Activated CD4-positive, alpha-beta T cell treated with anti-CD3 and anti-CD28 coated beads, Interleukin-2, amount 10 ng/mL, durations not matched to agents 7 days and 5 days (primary cell): ENCODE measurements at regions of chr21 and their contacts with region 1.

Region 1: GRCh38 chr21:40270047-40270446 is 402.8 kb downstream of the PCP4 start:
- DNase-seq: no peak
- H3K4me3 Mint-ChIP-seq: no peak overlapping the region
- H3K27ac Mint-ChIP-seq: no peak overlapping the region
- H3K4me1 Mint-ChIP-seq: no peaks in the 10 kb centered on the region
- H3K27me3 Mint-ChIP-seq: no peaks in the 10 kb centered on the region

Region 2: GRCh38 chr21:40080385-40080784 is 189.7 kb before region 1 on chr21:
- CTCF ChIA-PET with region 1: no interaction called
- POLR2A ChIA-PET with region 1: no interaction called
- DNase-seq: no peak
- H3K4me3 Mint-ChIP-seq: no peak overlapping the region
- H3K27ac Mint-ChIP-seq: no peak overlapping the region
- H3K4me1 Mint-ChIP-seq: no peaks in the 10 kb centered on the region
- H3K27me3 Mint-ChIP-seq: no peaks in the 10 kb centered on the region

Region 3: DNA sequence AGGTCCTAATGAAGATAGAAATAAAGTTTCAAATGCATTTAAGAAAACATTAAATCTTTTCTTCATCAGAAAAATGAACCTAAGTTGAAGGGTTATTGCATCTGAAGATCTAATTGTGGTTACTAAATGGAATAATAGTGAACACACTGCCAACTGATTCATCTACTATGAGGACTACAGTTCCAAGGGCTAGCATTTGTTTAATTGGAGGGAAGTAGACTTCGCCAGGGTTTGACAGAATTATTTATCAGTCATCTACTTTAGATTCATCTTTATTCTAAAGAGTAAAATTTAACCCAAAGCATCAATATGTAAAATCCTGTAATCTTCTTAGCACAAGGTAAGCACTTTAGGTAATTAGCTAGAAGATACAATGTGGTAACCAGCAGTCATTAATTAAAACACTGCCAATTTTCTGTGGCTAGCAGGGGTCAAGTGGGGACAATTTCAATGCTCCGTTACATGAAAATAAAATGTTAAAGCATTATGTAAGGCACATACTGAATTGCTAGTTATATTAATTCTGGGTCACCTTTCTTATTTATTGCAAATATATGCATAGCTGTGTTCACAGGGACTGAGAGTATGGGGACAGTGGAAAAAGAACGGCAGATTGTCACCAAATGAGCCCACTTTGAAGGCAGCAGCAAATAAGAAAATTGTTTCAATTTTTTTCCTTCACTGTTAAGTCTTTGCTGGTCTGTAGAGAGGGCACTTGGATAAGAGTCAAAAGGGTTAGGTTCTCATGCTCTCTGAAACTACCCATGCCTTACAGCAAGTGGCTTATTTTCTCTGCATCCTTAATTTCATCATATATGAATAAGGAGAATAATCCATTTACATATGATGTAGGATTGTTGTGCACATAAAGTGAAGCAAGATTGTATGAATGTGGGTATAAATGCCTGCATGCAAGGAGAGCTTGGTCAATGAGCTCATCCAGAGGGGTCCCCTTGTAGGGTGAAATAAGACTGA is 13.2 kb after region 1 on chr21:
- CTCF ChIA-PET with region 1: no interaction called
- POLR2A ChIA-PET with region 1: interaction called, 14 read pairs
- DNase-seq: no peak
- H3K4me3 Mint-ChIP-seq: no peak overlapping the region
- H3K27ac Mint-ChIP-seq: no peak overlapping the region
- H3K4me1 Mint-ChIP-seq: no peaks in the 10 kb centered on the region
- H3K27me3 Mint-ChIP-seq: no peaks in the 10 kb centered on the region

Region 4: DNA sequence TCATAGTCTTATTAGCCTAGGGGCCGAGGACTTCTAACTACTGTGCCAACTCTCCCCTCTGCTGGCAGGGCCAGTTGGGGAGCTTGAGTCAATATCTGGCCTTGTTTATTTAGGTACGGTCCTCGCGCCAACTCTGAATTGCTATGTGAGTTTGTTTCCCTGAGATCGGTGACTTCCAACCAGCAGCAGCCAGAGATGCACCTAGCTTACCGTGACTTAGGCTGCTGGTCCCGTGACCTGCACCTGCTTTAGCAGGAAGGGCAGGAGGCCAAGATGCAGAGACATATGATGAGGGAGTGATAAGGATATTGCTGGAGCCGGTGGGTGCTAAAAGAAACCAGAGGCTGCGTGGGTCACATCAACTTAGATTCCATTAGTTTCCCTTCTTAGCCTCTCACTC is 48.4 kb after region 1 on chr21:
- CTCF ChIA-PET with region 1: no interaction called
- POLR2A ChIA-PET with region 1: no interaction called
- DNase-seq: no peak
- H3K4me3 Mint-ChIP-seq: no peak overlapping the region
- H3K27ac Mint-ChIP-seq: no peak overlapping the region
- H3K4me1 Mint-ChIP-seq: no peaks in the 10 kb centered on the region
- H3K27me3 Mint-ChIP-seq: no peaks in the 10 kb centered on the region